Activated CD8-positive, alpha-beta T cell treated with anti-CD3 and anti-CD28 coated beads, Interleukin-2, amount 10 ng/mL, durations not matched to agents 7 days and 5 days (primary cell): ENCODE measurements at regions of chr12 and their contacts with region 1.

Region 1: GRCh38 chr12:53159195-53159839 is 21.2 kb upstream of the ZNF740 start:
- DNase-seq: peak; percentile 95
- ATAC-seq: peak; percentile 99
- H3K4me3 Mint-ChIP-seq: no peak overlapping the region
- H3K27ac Mint-ChIP-seq: peak overlapping the region; percentile 81
- H3K4me1 Mint-ChIP-seq: peaks cover 18% of the 10 kb centered on the region
- H3K27me3 Mint-ChIP-seq: no peaks in the 10 kb centered on the region

Region 2: DNA sequence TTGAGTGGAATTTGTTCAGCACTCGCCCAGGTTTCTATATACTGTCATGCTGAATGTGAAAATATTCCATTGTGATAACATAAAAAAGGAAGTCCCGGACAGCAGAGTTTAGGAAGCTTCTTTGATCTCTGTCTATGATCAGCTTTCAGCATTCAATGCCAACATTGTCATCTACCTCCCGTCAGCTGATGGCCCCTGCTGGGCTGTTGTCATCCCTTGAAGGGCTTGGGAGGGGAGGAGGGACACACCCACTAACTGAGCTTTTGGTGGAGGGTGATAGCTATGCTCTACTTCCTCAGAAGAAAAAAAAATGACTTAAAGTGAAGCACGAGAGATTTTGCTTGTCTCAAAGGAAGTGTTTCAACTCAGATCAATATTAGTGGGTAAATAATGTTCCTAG is 451.3 kb before region 1 on chr12:
- CTCF ChIA-PET with region 1: no interaction called
- POLR2A ChIA-PET with region 1: no interaction called
- DNase-seq: no peak
- ATAC-seq: no peak
- H3K4me3 Mint-ChIP-seq: no peak overlapping the region
- H3K27ac Mint-ChIP-seq: no peak overlapping the region
- H3K4me1 Mint-ChIP-seq: no peaks in the 10 kb centered on the region
- H3K27me3 Mint-ChIP-seq: peaks cover 18% of the 10 kb centered on the region

Region 3: DNA sequence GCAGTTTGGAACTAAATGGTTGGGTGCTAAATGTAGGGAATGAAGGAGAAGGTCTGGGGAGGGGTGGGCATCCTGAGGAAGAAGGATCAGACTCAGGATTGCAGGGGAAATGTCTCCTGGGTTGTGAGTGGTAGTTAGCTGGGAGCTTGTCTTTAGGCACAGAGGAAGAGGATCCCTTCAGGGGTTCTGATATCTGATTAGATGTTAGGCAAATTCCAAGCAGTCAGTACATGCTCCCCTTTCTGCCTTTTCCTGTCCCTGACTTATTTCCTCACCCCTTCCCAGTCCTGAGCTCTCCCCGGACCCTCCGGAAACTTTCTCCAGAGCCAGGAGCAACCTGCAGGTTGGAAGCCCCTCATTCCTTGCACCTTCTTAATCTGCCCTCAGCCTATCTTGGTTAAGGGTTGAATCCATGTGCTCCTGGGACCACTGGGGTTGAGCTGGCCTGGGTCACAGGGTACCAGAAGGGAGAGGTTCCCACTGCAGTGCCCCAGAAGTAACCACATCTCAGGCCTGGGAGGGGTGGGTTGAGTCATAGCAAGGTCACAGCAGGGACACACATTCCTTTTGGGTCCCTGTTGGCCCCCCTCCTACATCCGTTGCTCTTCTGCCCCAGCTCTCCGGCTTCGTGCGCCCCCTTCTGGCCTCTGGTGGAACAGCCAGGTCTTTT is 60.2 kb before region 1 on chr12:
- CTCF ChIA-PET with region 1: interaction called, 18 read pairs
- POLR2A ChIA-PET with region 1: no interaction called
- DNase-seq: peak; percentile 94
- ATAC-seq: peak; percentile 25
- H3K4me3 Mint-ChIP-seq: peak overlapping the region; percentile 17
- H3K27ac Mint-ChIP-seq: peak overlapping the region; percentile 91
- H3K4me1 Mint-ChIP-seq: peaks cover 68% of the 10 kb centered on the region
- H3K27me3 Mint-ChIP-seq: peaks cover 8% of the 10 kb centered on the region

Region 4: GRCh38 chr12:53180220-53180930 is 21.1 kb after region 1 on chr12 and contains the starts of genes CSAD and ZNF740:
- CTCF ChIA-PET with region 1: interaction called, 27 read pairs
- POLR2A ChIA-PET with region 1: interaction called, 8 read pairs
- DNase-seq: peak; percentile 98
- ATAC-seq: peak; percentile 97
- H3K4me3 Mint-ChIP-seq: peak within 1 kb of the TSS; percentile 86
- H3K27ac Mint-ChIP-seq: peak within 1 kb of the TSS; percentile 98
- H3K4me1 Mint-ChIP-seq: peaks cover 50% of the 10 kb centered on the region
- H3K27me3 Mint-ChIP-seq: no peaks in the 10 kb centered on the region
- total RNA-seq, gene CSAD: 15.7 to 17.0 TPM
- total RNA-seq, gene ZNF740: 28.2 to 31.4 TPM

Region 5: GRCh38 chr12:53205747-53206419 is 46.6 kb after region 1 on chr12:
- CTCF ChIA-PET with region 1: interaction called, 58 read pairs
- POLR2A ChIA-PET with region 1: interaction called, 3 read pairs
- DNase-seq: peak; percentile 90
- ATAC-seq: peak; percentile 71
- H3K4me3 Mint-ChIP-seq: peak overlapping the region; percentile 83
- H3K27ac Mint-ChIP-seq: peak overlapping the region; percentile 86
- H3K4me1 Mint-ChIP-seq: peaks cover 80% of the 10 kb centered on the region
- H3K27me3 Mint-ChIP-seq: no peaks in the 10 kb centered on the region

Region 6: DNA sequence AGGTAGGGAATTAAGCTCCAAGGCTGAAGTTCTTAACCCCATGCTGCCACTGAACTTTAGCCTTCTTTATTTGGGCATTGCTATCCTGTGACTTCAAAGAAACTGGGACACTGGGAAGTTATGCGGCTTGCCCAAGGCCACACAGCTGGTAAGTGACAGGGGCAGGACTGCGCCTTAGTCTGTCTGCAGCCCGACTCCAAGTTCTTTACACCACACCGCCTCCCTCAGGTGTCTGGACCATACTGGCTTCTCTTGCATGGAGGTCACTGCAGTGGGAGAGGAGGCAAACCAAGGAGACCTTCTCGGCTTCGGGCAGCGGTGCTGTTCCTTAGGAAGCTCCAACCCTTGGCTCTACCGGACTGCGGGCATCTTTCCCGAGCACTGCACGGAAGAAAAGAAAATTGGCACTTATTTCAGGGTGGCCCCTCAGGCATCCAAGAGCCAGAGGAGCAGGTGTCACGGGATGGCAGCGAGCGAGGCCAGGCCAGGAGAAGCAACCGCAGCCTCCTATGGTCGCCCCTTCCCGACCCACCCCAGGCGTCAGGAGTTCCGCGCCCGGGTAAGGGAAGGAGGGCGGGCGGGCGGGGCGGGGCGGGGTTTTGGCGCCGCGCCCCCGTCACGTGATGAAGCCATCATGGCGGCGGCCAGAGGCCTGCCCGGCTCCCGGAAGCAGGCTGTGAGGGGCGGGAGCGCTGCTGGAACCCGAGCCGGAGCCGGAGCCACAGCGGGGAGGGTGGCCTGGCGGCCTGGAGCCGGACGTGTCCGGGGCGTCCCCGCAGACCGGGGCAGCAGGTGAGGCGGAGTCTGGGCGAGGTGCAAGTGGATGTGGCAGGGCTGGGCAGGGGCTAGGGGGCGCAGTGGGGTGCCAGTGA is 92.4 kb after region 1 on chr12:
- CTCF ChIA-PET with region 1: interaction called, 10 read pairs
- POLR2A ChIA-PET with region 1: no interaction called
- DNase-seq: peak; percentile 74
- ATAC-seq: peak; percentile 87
- H3K4me3 Mint-ChIP-seq: peak overlapping the region; percentile 99
- H3K27ac Mint-ChIP-seq: peak overlapping the region; percentile 94
- H3K4me1 Mint-ChIP-seq: peaks cover 54% of the 10 kb centered on the region
- H3K27me3 Mint-ChIP-seq: peaks cover 3% of the 10 kb centered on the region

Region 7: DNA sequence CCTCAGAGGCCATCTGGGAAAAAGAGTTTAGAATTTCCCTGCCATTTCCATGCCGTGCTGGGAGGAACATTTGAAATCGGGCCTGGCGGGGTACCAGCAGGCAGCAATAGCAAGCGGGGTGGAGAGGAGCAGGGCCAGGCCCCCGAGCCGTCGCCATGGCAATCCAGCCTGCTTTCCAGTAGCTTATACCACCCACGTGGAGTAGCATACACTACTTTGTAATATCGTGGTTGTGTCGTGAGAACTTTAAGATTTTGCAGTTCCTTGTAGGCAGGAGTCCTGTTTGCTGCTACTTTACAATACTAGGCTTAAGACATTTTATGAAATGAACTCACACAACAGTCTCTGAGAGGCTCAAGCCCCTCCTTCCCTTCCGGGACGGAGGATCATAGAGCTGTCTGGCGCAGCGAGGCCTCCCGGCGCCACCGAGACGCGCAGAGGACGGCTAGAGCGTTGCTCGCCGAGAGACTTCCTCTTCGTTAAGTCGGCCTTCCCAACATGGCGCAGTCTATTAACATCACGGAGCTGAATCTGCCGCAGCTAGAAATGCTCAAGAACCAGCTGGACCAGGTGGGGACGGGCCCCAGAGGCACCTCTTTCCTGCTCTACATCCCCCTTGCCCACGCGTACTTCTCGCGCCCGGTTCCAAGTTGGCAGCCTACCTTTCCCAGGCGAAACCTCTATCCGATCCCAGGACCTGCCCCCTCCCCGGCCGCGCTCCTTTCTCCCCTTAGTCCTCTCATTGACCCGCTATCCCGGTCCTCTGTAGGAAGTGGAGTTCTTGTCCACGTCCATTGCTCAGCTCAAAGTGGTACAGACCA is 136.0 kb after region 1 on chr12 and contains the start of gene PFDN5:
- CTCF ChIA-PET with region 1: interaction called, 15 read pairs
- POLR2A ChIA-PET with region 1: interaction called, 3 read pairs
- DNase-seq: peak; percentile 93
- ATAC-seq: peak; percentile 88
- H3K4me3 Mint-ChIP-seq: peak within 1 kb of the TSS; percentile 97
- H3K27ac Mint-ChIP-seq: peak within 1 kb of the TSS; percentile 92
- H3K4me1 Mint-ChIP-seq: peaks cover 40% of the 10 kb centered on the region
- H3K27me3 Mint-ChIP-seq: no peaks in the 10 kb centered on the region
- total RNA-seq, gene PFDN5: 292 to 307 TPM